ENCODE measurements at regions of chr6 and their contacts with region 1.

Region 1: DNA sequence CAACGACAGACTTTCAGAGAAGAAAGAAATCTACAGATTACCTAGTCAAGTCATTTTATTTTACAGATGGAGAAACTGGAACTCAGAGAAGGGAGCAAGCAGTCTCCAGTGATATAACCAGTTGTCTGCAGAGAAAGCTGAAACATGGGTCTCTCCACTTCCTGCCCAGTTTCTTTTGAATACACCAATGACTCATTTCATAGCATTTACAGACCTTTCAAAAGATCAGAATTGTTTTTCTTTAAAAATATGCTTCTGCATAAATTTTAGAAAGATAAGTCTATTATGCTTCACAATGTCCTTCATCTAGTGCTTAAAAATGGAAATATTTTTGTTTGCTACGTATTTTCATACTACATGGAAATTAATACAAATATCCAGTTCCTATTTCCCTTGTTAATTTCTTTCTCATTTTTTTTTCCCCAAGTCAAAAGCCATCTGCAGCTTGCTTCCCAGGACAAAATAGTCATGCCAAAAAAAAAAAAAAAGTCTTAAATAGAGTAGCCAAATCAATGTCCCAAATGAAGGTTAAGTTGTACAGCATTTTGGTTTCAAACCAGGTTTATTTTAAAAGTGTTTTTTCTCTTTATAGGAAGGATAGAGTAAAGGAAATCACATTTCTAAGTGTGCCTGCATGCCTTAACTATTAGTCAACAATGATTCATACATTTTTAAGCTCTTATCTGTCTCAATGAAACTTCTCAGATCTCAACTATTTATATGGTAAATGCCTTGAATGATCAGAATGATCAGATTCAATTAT is 36.9 kb downstream of the ARHGAP18 start:
- DNase-seq: peak; percentile 60
- ATAC-seq: peak; percentile 82
- H3K4me3 ChIP-seq: peak overlapping the region; percentile 58; the same call in 1 of the 2 replicates
- H3K27ac ChIP-seq: peak overlapping the region; percentile 98
- H3K4me1 ChIP-seq: peaks cover 53% of the 10 kb centered on the region
- H3K27me3 ChIP-seq: no peaks in the 10 kb centered on the region
- CTCF ChIP-seq: no peak
- EP300 ChIP-seq: 0 out of 4 replicates have a peak, but pooled peaks of 1 of the 2 experiments have one; percentile 43
- POLR2A ChIP-seq: no peak
- RAD21 ChIP-seq: no peak

Region 2: DNA sequence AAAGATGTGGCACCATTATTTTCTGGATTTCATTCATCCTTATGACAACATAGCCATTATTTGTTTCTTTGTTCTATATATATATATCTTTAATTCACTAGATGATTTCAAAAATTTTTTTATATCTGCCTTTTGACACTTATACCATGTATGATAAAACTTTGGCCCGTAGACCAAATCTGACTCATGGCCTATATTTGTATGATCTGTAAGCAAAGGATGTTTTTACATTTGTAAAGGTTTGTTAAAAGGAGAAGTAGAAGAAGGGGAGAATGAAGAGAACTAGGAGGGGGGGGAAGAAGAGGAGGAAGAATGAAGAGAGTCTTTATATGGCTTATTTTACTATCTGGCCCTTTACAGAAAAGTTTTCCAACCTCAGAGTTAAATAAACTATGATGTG is 510.5 kb before region 1 on chr6:
- CTCF ChIA-PET with region 1: no interaction called
- POLR2A ChIA-PET with region 1: no interaction called
- RAD21 ChIA-PET with region 1: no interaction called
- SMC1A ChIA-PET with region 1: no interaction called
- in situ Hi-C with region 1: no loop called
- intact Hi-C with region 1: no loop called
- DNase-seq: no peak
- ATAC-seq: no peak
- H3K4me3 ChIP-seq: no peak overlapping the region
- H3K27ac ChIP-seq: no peak overlapping the region
- H3K4me1 ChIP-seq: no peaks in the 10 kb centered on the region
- H3K27me3 ChIP-seq: no peaks in the 10 kb centered on the region
- CTCF ChIP-seq: no peak
- EP300 ChIP-seq: no peak
- POLR2A ChIP-seq: no peak
- RAD21 ChIP-seq: no peak

Region 3: GRCh38 chr6:129432738-129433137 is 240.3 kb before region 1 on chr6:
- CTCF ChIA-PET with region 1: no interaction called
- POLR2A ChIA-PET with region 1: no interaction called
- RAD21 ChIA-PET with region 1: no interaction called
- SMC1A ChIA-PET with region 1: no interaction called
- in situ Hi-C with region 1: no loop called
- intact Hi-C with region 1: no loop called
- DNase-seq: no peak
- ATAC-seq: peak; percentile 34; the same call in 1 of the 3 replicates
- H3K4me3 ChIP-seq: no peak overlapping the region
- H3K27ac ChIP-seq: no peak overlapping the region
- H3K4me1 ChIP-seq: no peaks in the 10 kb centered on the region
- H3K27me3 ChIP-seq: peaks cover 0 to 2% of the 10 kb centered on the region in 2 experiments; a peak in 1 of 4 replicates
- CTCF ChIP-seq: peak in 2 of 3 experiments; percentile 26 to 32; a peak in 2 of 6 replicates
- EP300 ChIP-seq: no peak
- POLR2A ChIP-seq: no peak
- RAD21 ChIP-seq: no peak

Region 4: DNA sequence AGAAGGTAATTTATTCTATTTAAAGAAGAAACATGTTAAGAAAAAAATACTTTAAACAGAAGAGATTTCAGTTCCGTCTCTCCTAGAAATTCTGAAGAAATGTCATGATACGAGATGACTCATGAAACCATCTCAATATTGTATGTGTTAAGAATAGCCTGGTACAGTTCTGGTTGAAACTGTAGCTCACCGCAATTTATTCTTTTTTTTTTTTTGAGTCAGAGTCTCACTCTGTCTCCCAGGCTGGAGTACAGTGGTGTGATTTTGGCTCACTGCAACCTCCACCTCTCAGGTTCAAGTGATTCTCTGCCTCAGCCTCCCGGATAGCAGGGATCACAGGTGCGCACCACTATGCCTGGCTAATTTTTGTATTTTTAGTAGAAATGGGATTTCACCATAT is 66.4 kb before region 1 on chr6:
- CTCF ChIA-PET with region 1: interaction called, 41 read pairs
- POLR2A ChIA-PET with region 1: no interaction called
- RAD21 ChIA-PET with region 1: interaction called, 10 read pairs
- SMC1A ChIA-PET with region 1: interaction called, 5 read pairs
- in situ Hi-C with region 1: no loop called
- intact Hi-C with region 1: no loop called
- DNase-seq: peak; percentile 59
- ATAC-seq: peak; percentile 87
- H3K4me3 ChIP-seq: no peak overlapping the region
- H3K27ac ChIP-seq: peak overlapping the region; percentile 80
- H3K4me1 ChIP-seq: peaks cover 31% of the 10 kb centered on the region
- H3K27me3 ChIP-seq: no peaks in the 10 kb centered on the region
- CTCF ChIP-seq: no peak
- EP300 ChIP-seq: peak; percentile 34 to 51; a peak in 2 of 4 replicates
- POLR2A ChIP-seq: no peak
- RAD21 ChIP-seq: 0 out of 2 replicates have a peak, but pooled peaks have one; percentile 11

Region 5: DNA sequence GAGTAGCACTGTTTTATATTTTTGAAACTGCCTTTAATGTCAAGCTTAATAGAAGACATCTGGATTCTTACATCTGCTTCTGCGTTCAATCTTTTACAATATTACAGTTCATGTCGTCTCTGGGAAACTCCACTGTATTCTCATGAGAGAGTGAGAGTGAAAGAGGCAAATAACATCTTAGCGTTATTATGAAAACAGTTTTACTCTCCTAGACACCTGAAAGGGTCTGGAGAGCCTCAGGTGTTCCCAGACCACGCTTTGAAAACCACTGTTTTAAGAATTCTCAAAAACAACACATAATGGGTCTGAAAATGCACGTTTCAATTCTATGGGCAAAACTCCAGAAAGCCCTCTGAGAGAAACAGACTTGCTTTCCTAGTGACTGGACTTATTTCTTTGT is 26.4 kb before region 1 on chr6:
- CTCF ChIA-PET with region 1: interaction called, 7 read pairs
- POLR2A ChIA-PET with region 1: interaction called, 7 read pairs
- RAD21 ChIA-PET with region 1: interaction called, 6 read pairs
- SMC1A ChIA-PET with region 1: interaction called, 15 read pairs
- in situ Hi-C with region 1: no loop called
- intact Hi-C with region 1: no loop called
- DNase-seq: peak; percentile 61
- ATAC-seq: peak; percentile 84
- H3K4me3 ChIP-seq: no peak overlapping the region
- H3K27ac ChIP-seq: peak overlapping the region; percentile 65
- H3K4me1 ChIP-seq: peaks cover 42% of the 10 kb centered on the region
- H3K27me3 ChIP-seq: no peaks in the 10 kb centered on the region
- CTCF ChIP-seq: no peak
- EP300 ChIP-seq: peak in 1 of 2 experiments; percentile 77; a peak in 2 of 4 replicates
- POLR2A ChIP-seq: no peak
- RAD21 ChIP-seq: no peak

Region 6: DNA sequence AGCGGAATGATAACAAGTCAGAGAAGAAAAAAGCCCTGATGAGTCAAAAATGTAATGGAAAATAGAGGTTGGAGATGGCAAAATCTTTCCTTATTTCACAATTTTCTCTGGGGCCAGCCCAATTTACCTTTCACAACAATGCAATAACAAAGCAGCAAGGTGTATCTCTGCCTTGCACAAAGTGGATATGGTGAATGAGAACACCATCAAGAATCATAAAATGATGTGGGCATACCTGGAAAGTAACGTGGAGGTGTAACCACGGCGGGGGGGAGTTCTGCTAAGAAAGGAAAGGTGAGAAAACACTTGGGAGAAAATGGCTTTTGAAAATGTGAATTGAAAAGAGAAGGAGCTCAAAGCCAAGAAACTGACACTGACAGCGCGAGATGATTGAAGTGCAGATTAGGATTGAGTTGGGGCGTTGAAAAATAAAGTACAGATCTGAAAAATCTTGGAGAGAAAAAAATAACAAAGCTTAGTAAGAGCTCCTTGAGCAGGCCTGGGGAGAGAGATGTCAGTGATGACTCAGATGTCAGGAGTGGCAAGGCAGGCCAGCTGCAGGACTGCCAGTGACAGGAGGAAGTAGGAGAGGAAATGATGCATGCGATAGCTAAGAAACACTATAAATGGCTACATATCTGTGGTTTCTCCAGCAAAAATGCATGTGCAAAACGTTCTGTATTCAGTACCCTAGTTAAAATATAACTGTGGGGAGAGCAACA is 10.7 kb after region 1 on chr6:
- CTCF ChIA-PET with region 1: interaction called, 36 read pairs
- POLR2A ChIA-PET with region 1: interaction called, 45 read pairs
- RAD21 ChIA-PET with region 1: interaction called, 66 read pairs
- SMC1A ChIA-PET with region 1: interaction called, 122 read pairs
- in situ Hi-C with region 1: no loop called
- intact Hi-C with region 1: loop called (anchors 1 kb)
- DNase-seq: peak; percentile 88
- ATAC-seq: peak; percentile 90
- H3K4me3 ChIP-seq: peak overlapping the region; percentile 30; the same call in 1 of the 2 replicates
- H3K27ac ChIP-seq: peak overlapping the region; percentile 93
- H3K4me1 ChIP-seq: peaks cover 48% of the 10 kb centered on the region
- H3K27me3 ChIP-seq: no peaks in the 10 kb centered on the region
- CTCF ChIP-seq: no peak
- EP300 ChIP-seq: peak; percentile 97 to 98
- POLR2A ChIP-seq: peak; percentile 38; the same call in 1 of the 2 replicates
- RAD21 ChIP-seq: peak; percentile 16; the same call in 1 of the 2 replicates

Region 7: GRCh38 chr6:129701721-129702455 is 28.8 kb after region 1 on chr6:
- CTCF ChIA-PET with region 1: interaction called, 117 read pairs
- POLR2A ChIA-PET with region 1: interaction called, 115 read pairs
- RAD21 ChIA-PET with region 1: interaction called, 189 read pairs
- SMC1A ChIA-PET with region 1: interaction called, 434 read pairs
- in situ Hi-C with region 1: no loop called
- intact Hi-C with region 1: no loop called
- DNase-seq: no peak
- ATAC-seq: no peak
- H3K4me3 ChIP-seq: peak overlapping the region; percentile 30; the same call in 1 of the 2 replicates
- H3K27ac ChIP-seq: peak overlapping the region; percentile 14; the same call in 1 of the 2 replicates
- H3K4me1 ChIP-seq: peaks cover 37% of the 10 kb centered on the region
- H3K27me3 ChIP-seq: no peaks in the 10 kb centered on the region
- CTCF ChIP-seq: no peak
- EP300 ChIP-seq: no peak
- POLR2A ChIP-seq: no peak
- RAD21 ChIP-seq: no peak

Region 8: GRCh38 chr6:129717277-129717676 is 44.2 kb after region 1 on chr6:
- CTCF ChIA-PET with region 1: interaction called, 117 read pairs
- POLR2A ChIA-PET with region 1: no interaction called
- RAD21 ChIA-PET with region 1: interaction called, 189 read pairs
- SMC1A ChIA-PET with region 1: interaction called, 434 read pairs
- in situ Hi-C with region 1: no loop called
- intact Hi-C with region 1: no loop called
- DNase-seq: no peak
- ATAC-seq: no peak
- H3K4me3 ChIP-seq: no peak overlapping the region
- H3K27ac ChIP-seq: no peak overlapping the region
- H3K4me1 ChIP-seq: no peaks in the 10 kb centered on the region
- H3K27me3 ChIP-seq: no peaks in the 10 kb centered on the region
- CTCF ChIP-seq: no peak
- EP300 ChIP-seq: no peak
- POLR2A ChIP-seq: no peak
- RAD21 ChIP-seq: no peak

Measured in GM12878 (cell line).